ENCODE measurements at regions of chr4 and their contacts with region 1.

Region 1: GRCh38 chr4:6716018-6716911 is at the start of gene BLOC1S4:
- DNase-seq: peak; percentile 86
- ATAC-seq: peak; percentile 81
- H3K4me3 ChIP-seq: peak within 1 kb of the TSS; percentile 92
- H3K27ac ChIP-seq: peak within 1 kb of the TSS; percentile 81
- H3K4me1 ChIP-seq: peaks cover 7% of the 10 kb centered on the region
- H3K27me3 ChIP-seq: no peaks in the 10 kb centered on the region
- CTCF ChIP-seq: no peak
- EP300 ChIP-seq: no peak
- POLR2A ChIP-seq: peak; percentile 97
- RAD21 ChIP-seq: no peak
- polyA plus RNA-seq, gene BLOC1S4: 2.7 to 6.3 TPM

Region 2: GRCh38 chr4:6703786-6704185 is 12.5 kb before region 1 on chr4:
- CTCF ChIA-PET with region 1: interaction called, 18 read pairs
- POLR2A ChIA-PET with region 1: interaction called, 7 read pairs
- RAD21 ChIA-PET with region 1: interaction called, 5 read pairs
- SMC1A ChIA-PET with region 1: interaction called, 13 read pairs
- in situ Hi-C with region 1: no loop called
- intact Hi-C with region 1: no loop called
- DNase-seq: no peak
- ATAC-seq: no peak
- H3K4me3 ChIP-seq: no peak overlapping the region
- H3K27ac ChIP-seq: no peak overlapping the region; the same call in 1 of the 2 replicates
- H3K4me1 ChIP-seq: peaks cover 8% of the 10 kb centered on the region; the same call in 1 of the 2 replicates
- H3K27me3 ChIP-seq: no peaks in the 10 kb centered on the region
- CTCF ChIP-seq: no peak
- EP300 ChIP-seq: no peak
- POLR2A ChIP-seq: no peak
- RAD21 ChIP-seq: no peak

Region 3: DNA sequence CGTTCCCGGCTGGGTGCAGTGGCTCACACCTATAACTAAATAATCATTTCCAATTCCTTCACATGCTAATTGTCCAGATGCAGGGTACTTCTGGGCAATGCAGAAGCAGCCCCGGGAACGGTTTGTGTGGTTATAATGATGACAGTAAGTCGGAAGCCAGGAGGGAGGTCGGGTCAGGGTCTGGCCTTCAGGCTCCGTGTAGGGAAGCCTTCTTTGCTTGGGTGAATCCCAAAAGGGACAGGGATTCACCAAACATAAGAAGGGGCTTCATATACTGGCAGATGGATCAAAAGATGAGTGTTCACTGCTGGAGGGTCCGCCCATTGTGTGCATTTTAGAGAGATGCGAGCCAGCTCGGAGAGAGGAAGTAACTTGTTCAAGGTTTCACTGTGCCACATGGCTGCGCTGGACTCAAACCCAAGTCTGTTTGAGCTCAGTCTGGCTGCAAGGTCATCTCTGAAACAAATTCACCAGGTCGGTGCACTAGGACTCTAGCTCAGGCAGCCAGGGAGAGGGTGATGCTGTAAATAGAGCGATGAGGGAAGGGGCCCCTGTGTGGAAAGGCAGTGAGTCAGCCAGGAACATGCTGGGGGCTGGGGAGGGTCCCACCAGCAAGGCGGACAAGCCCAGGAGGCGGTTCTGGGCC is 61.5 kb after region 1 on chr4:
- CTCF ChIA-PET with region 1: interaction called, 19 read pairs
- POLR2A ChIA-PET with region 1: interaction called, 6 read pairs
- RAD21 ChIA-PET with region 1: interaction called, 7 read pairs
- SMC1A ChIA-PET with region 1: interaction called, 4 read pairs
- in situ Hi-C with region 1: no loop called
- intact Hi-C with region 1: loop called (anchors 2 kb)
- DNase-seq: no peak
- ATAC-seq: peak; percentile 39
- H3K4me3 ChIP-seq: no peak overlapping the region
- H3K27ac ChIP-seq: no peak overlapping the region
- H3K4me1 ChIP-seq: peaks cover 10% of the 10 kb centered on the region; the same call in 1 of the 2 replicates
- H3K27me3 ChIP-seq: peaks cover 0 to 3% of the 10 kb centered on the region in 2 experiments; a peak in 1 of 4 replicates
- CTCF ChIP-seq: peak; percentile 16 to 55 (median 30); a peak in 4 of 6 replicates
- EP300 ChIP-seq: no peak
- POLR2A ChIP-seq: no peak
- RAD21 ChIP-seq: peak; percentile 41; the same call in 1 of the 2 replicates

Region 4: GRCh38 chr4:6855692-6856297 is 139.5 kb after region 1 on chr4:
- CTCF ChIA-PET with region 1: interaction called, 8 read pairs
- POLR2A ChIA-PET with region 1: interaction called, 3 read pairs
- RAD21 ChIA-PET with region 1: interaction called, 5 read pairs
- SMC1A ChIA-PET with region 1: interaction called, 11 read pairs
- in situ Hi-C with region 1: no loop called
- intact Hi-C with region 1: loop called (anchors 1 kb)
- DNase-seq: peak; percentile 94
- ATAC-seq: peak; percentile 94
- H3K4me3 ChIP-seq: no peak overlapping the region
- H3K27ac ChIP-seq: peak overlapping the region; percentile 58
- H3K4me1 ChIP-seq: peaks cover 18% of the 10 kb centered on the region
- H3K27me3 ChIP-seq: no peaks in the 10 kb centered on the region
- CTCF ChIP-seq: no peak
- EP300 ChIP-seq: peak; percentile 97 to 98
- POLR2A ChIP-seq: peak; percentile 24; the same call in 1 of the 2 replicates
- RAD21 ChIP-seq: no peak

Region 5: DNA sequence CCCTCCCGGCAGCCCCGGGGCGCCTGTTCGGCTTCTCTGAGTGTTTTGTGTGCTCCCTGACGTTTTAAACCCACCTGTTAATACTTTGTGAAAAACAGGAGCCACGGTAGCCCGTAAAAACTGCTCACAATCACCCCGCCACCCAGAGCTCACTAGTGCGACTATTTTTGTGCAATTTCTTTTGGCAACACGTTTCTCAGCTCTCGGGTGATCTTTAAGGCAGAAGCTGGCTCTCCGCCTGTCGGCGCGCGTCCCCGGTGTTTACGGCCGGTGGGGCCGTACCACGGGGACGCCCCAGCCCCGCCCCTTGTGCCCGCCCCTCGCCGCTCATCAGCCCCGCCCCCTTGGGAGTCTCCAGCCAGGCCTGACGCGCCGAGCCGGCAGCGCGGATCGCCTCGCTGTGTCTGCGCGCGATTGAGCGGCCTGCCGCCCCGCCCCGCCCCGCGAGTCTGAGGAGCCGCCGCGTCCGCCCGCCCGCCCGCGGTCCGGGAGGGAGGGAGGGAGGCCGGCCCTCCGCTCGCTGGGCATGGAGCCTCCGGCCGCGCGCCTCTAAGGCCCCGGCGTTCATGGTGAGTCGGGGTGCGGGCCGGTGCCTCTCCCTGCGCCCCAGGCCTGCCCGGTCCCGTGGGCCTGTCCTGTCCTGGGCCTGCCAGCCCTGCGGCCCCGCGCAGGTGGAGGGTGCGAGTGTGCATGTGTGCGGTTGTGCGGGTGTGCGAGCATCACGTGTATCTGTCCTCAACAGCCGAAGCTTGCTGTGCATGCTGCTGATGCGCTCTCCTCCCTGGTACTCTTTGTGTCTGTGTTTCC is 270.7 kb after region 1 on chr4:
- CTCF ChIA-PET with region 1: interaction called, 4 read pairs
- POLR2A ChIA-PET with region 1: no interaction called
- RAD21 ChIA-PET with region 1: interaction called, 4 read pairs
- SMC1A ChIA-PET with region 1: no interaction called
- in situ Hi-C with region 1: no loop called
- intact Hi-C with region 1: loop called (anchors 5 kb)
- DNase-seq: peak; percentile 60
- ATAC-seq: peak; percentile 90
- H3K4me3 ChIP-seq: peak overlapping the region; percentile 85
- H3K27ac ChIP-seq: peak overlapping the region; percentile 83
- H3K4me1 ChIP-seq: peaks cover 19% of the 10 kb centered on the region
- H3K27me3 ChIP-seq: no peaks in the 10 kb centered on the region
- CTCF ChIP-seq: peak in 1 of 3 experiments; percentile 5; a peak in 2 of 6 replicates
- EP300 ChIP-seq: no peak
- POLR2A ChIP-seq: peak; percentile 84
- RAD21 ChIP-seq: peak; percentile 13; the same call in 1 of the 2 replicates

Region 6: DNA sequence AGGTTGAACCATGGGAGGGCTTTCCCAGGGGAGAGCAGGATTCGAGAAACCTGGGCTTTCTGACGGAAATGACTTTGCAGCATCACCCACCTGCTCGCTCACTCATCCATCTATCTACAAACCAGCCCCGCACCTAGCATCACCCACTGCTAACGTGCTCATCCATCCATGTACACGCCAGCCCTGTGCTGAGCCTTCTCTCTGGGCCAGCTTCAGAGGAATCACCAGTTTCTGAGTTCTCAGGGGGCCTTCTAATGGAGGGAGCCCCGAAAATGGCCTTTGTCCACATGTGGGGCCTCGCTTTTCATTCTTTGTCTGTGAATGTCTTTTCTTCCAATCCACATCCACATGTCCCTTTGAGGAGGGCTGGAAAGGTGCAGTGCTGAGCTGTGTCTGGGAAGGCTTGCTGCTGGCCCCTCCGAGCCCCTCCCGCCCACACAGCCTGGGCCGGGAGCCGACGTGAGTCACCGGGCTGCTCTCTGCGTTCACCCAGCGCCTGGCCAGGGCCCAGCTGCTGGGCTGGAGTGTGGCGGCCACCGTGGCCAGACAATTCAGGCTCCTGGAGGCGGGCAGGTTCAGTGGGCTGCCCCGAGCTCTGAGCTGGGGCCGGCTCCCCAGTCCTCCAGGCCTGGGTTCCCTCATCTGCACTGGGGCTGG is 490.8 kb after region 1 on chr4:
- CTCF ChIA-PET with region 1: no interaction called
- POLR2A ChIA-PET with region 1: no interaction called
- RAD21 ChIA-PET with region 1: no interaction called
- SMC1A ChIA-PET with region 1: no interaction called
- in situ Hi-C with region 1: no loop called
- intact Hi-C with region 1: no loop called
- DNase-seq: no peak
- ATAC-seq: no peak
- H3K4me3 ChIP-seq: no peak overlapping the region
- H3K27ac ChIP-seq: no peak overlapping the region
- H3K4me1 ChIP-seq: no peaks in the 10 kb centered on the region
- H3K27me3 ChIP-seq: peaks cover 0 to 3% of the 10 kb centered on the region in 2 experiments; a peak in 3 of 4 replicates
- CTCF ChIP-seq: no peak
- EP300 ChIP-seq: no peak
- POLR2A ChIP-seq: no peak
- RAD21 ChIP-seq: no peak

Measured in GM12878 (cell line).